GM12878 (cell line): ENCODE measurements at regions of chr18 and their contacts with region 1.

Region 1: DNA sequence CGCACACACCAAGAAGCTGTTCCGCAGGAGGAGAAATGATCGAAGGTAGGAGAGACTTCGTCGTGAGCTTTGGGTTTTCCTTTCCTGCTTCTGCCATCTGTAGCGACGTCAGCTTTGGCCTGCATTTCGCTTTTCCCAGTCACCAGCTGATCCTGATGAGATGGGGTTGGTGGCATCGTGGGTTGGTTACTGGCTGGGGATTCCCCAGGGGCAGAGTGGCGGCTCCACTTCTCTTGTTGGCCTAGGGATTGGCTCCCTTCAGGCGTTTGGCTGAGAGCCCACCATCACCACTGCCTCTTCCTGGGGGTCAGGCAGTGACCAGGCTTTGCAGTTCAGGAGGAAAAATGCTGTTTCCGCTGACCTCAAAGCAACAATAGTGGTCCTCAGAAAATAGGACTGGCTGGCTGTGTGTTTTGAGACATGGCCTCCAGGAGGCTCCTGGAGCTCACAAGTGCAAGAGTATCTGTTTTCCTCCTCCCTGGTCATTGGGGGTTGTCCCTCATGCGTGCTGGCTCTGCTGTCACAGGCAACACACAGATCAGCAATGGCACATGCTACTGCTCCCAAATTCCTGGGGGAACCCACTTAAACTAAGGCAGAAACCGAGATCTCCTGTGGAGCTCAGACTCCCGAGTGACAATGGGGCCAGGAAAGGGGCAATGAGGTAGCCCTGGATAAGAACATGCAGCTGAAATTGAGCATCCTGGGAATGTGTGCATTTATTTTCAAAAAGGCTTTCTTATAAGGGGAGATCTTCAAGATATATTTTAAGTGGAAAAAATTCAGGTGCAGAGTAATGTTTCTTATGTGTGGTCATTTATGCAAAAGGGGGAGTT is 173.0 kb downstream of the CTIF start:
- DNase-seq: no peak
- ATAC-seq: peak; percentile 85
- H3K4me3 ChIP-seq: no peak overlapping the region
- H3K27ac ChIP-seq: no peak overlapping the region
- H3K4me1 ChIP-seq: peaks cover 11% of the 10 kb centered on the region
- H3K27me3 ChIP-seq: no peaks in the 10 kb centered on the region
- CTCF ChIP-seq: peak; percentile 59 to 81 (median 60)
- EP300 ChIP-seq: no peak
- POLR2A ChIP-seq: no peak
- RAD21 ChIP-seq: peak; percentile 83

Region 2: GRCh38 chr18:48728204-48728833 is 16.4 kb after region 1 on chr18:
- CTCF ChIA-PET with region 1: interaction called, 6 read pairs
- POLR2A ChIA-PET with region 1: interaction called, 5 read pairs
- RAD21 ChIA-PET with region 1: interaction called, 13 read pairs
- SMC1A ChIA-PET with region 1: interaction called, 32 read pairs
- in situ Hi-C with region 1: no loop called
- intact Hi-C with region 1: no loop called
- DNase-seq: no peak
- ATAC-seq: no peak
- H3K4me3 ChIP-seq: no peak overlapping the region
- H3K27ac ChIP-seq: no peak overlapping the region
- H3K4me1 ChIP-seq: peaks cover 31% of the 10 kb centered on the region
- H3K27me3 ChIP-seq: no peaks in the 10 kb centered on the region
- CTCF ChIP-seq: no peak
- EP300 ChIP-seq: no peak
- POLR2A ChIP-seq: no peak
- RAD21 ChIP-seq: no peak

Region 3: DNA sequence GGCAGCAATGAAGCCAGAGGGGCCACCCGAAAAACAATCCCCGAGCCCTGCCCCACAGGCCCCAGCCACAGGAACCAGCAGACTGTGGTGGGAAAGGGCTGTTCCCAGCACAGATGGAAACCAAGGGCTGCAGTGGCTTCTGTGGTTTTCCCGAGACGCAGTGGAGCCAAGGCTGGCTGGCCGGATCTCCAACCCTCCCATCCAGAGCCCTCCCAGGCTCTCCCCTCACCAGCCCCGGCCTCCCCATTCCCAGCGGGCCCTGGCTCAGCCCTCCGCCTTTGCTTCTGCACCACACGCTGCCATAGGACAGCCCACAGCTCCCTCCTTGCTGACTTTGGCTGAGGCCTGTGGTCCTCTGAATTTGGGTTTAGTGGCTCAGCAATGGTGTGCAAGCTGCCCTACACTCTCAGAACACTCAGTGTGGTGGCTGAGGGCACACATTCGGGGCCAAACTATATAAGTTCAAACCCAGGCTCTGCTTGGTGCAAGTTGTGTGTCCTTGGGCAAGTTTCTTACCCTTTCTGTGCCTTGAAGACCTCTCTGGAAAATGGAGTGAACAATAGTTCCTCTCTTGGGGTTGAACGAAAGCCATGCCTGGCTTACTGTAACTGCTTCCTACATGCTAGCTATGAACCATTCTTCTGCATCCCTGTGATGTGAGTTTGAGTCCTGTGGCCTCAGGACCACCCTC is 38.8 kb after region 1 on chr18:
- CTCF ChIA-PET with region 1: interaction called, 3 read pairs
- POLR2A ChIA-PET with region 1: interaction called, 4 read pairs
- RAD21 ChIA-PET with region 1: interaction called, 3 read pairs
- SMC1A ChIA-PET with region 1: interaction called, 10 read pairs
- in situ Hi-C with region 1: no loop called
- intact Hi-C with region 1: no loop called
- DNase-seq: no peak
- ATAC-seq: no peak
- H3K4me3 ChIP-seq: no peak overlapping the region
- H3K27ac ChIP-seq: no peak overlapping the region
- H3K4me1 ChIP-seq: peaks cover 28% of the 10 kb centered on the region
- H3K27me3 ChIP-seq: no peaks in the 10 kb centered on the region
- CTCF ChIP-seq: no peak
- EP300 ChIP-seq: no peak
- POLR2A ChIP-seq: no peak
- RAD21 ChIP-seq: no peak

Region 4: DNA sequence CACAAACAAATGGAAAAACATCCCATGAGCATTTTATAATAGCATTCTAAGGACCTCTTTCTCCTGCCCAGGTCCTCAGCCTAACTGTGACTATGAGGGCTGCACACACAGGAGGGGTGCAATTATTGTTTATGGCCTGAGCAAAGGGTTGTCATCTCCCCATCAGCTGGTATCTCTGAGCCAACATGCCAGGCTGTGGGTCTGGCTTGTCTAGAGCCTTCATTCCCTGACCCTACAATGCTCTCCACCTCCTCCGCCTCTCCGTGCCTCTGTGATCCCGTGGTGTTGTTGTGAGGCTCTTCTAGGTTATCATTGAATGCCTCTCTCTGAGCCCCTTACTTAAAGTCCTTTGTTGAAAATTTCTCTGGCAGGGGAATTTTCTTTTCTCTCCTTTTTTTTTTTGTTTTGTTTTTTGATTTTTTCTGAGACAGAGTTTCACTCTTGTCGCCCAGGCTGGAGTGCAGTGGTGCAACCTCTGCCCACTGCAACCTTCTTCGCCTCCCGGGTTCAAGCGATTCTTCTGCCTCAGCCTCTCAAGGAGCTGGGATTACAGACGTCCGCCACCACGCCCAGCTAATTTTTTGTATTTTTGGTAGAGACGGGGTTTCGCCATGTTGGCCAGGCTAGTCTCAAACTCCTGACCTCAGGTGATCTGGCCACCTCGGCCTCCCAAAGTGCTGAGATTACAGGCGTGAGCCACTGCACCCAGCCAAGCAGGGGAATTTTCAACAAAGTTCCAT is 112.5 kb after region 1 on chr18:
- CTCF ChIA-PET with region 1: no interaction called
- POLR2A ChIA-PET with region 1: no interaction called
- RAD21 ChIA-PET with region 1: no interaction called
- SMC1A ChIA-PET with region 1: no interaction called
- in situ Hi-C with region 1: no loop called
- intact Hi-C with region 1: no loop called
- DNase-seq: no peak
- ATAC-seq: no peak
- H3K4me3 ChIP-seq: no peak overlapping the region
- H3K27ac ChIP-seq: no peak overlapping the region
- H3K4me1 ChIP-seq: peaks cover 20% of the 10 kb centered on the region
- H3K27me3 ChIP-seq: no peaks in the 10 kb centered on the region
- CTCF ChIP-seq: no peak
- EP300 ChIP-seq: no peak
- POLR2A ChIP-seq: no peak
- RAD21 ChIP-seq: no peak

Region 5: GRCh38 chr18:48913201-48913600 is 201.3 kb after region 1 on chr18:
- CTCF ChIA-PET with region 1: interaction called, 3 read pairs
- POLR2A ChIA-PET with region 1: no interaction called
- RAD21 ChIA-PET with region 1: interaction called, 7 read pairs
- SMC1A ChIA-PET with region 1: interaction called, 4 read pairs
- in situ Hi-C with region 1: no loop called
- intact Hi-C with region 1: loop called (anchors 5 kb)
- DNase-seq: no peak
- ATAC-seq: peak; percentile 79
- H3K4me3 ChIP-seq: no peak overlapping the region
- H3K27ac ChIP-seq: no peak overlapping the region
- H3K4me1 ChIP-seq: peaks cover 10% of the 10 kb centered on the region
- H3K27me3 ChIP-seq: no peaks in the 10 kb centered on the region
- CTCF ChIP-seq: peak; percentile 38 to 51 (median 43); a peak in 5 of 6 replicates
- EP300 ChIP-seq: no peak
- POLR2A ChIP-seq: no peak
- RAD21 ChIP-seq: peak; percentile 34; the same call in 1 of the 2 replicates

Region 6: GRCh38 chr18:49041435-49042245 is 329.8 kb after region 1 on chr18:
- CTCF ChIA-PET with region 1: interaction called, 22 read pairs
- POLR2A ChIA-PET with region 1: no interaction called
- RAD21 ChIA-PET with region 1: interaction called, 4 read pairs
- SMC1A ChIA-PET with region 1: interaction called, 14 read pairs
- in situ Hi-C with region 1: no loop called
- intact Hi-C with region 1: no loop called
- DNase-seq: no peak
- ATAC-seq: peak; percentile 75
- H3K4me3 ChIP-seq: no peak overlapping the region
- H3K27ac ChIP-seq: no peak overlapping the region
- H3K4me1 ChIP-seq: no peaks in the 10 kb centered on the region
- H3K27me3 ChIP-seq: no peaks in the 10 kb centered on the region
- CTCF ChIP-seq: peak; percentile 49 to 56 (median 53); a peak in 5 of 6 replicates
- EP300 ChIP-seq: no peak
- POLR2A ChIP-seq: no peak
- RAD21 ChIP-seq: peak; percentile 51

Region 7: GRCh38 chr18:49178736-49179135 is 466.9 kb after region 1 on chr18:
- CTCF ChIA-PET with region 1: interaction called, 25 read pairs
- POLR2A ChIA-PET with region 1: no interaction called
- RAD21 ChIA-PET with region 1: interaction called, 12 read pairs
- SMC1A ChIA-PET with region 1: interaction called, 23 read pairs
- in situ Hi-C with region 1: no loop called
- intact Hi-C with region 1: loop called (anchors 1 kb)
- DNase-seq: no peak
- ATAC-seq: peak; percentile 71
- H3K4me3 ChIP-seq: no peak overlapping the region
- H3K27ac ChIP-seq: no peak overlapping the region
- H3K4me1 ChIP-seq: peaks cover 9% of the 10 kb centered on the region; the same call in 1 of the 2 replicates
- H3K27me3 ChIP-seq: no peaks in the 10 kb centered on the region
- CTCF ChIP-seq: peak; percentile 49 to 62 (median 56); a peak in 5 of 6 replicates
- EP300 ChIP-seq: no peak
- POLR2A ChIP-seq: no peak
- RAD21 ChIP-seq: peak; percentile 83

Region 8: DNA sequence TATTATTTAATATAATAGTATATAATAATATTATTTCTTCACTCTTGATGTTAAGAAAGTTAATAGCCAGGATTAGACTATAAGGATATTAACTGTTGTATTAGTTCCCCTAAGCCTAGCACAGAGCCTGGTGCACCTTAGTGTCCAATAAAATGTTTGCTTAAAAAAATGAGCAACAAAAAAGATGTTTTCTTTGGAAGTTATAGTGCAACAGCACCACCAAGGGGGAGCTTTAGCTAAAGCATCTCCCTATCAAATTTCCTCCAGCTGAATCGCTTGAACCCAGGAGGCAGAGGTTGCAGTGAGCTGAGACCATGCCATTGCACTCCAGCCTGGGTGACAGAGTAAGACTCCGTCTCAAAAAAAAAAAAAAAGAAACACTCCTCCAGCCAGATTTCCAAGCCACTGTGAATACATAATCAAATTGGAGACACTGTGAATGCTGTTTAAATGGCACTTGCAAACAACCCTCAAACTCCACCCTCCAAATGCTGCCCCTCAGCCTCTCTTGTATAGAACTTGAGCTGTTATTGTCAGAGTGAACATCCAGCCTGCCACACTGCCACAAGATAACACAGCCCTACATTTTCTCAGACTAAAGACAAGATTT is 526.7 kb after region 1 on chr18:
- CTCF ChIA-PET with region 1: interaction called, 7 read pairs
- POLR2A ChIA-PET with region 1: no interaction called
- RAD21 ChIA-PET with region 1: interaction called, 9 read pairs
- SMC1A ChIA-PET with region 1: interaction called, 10 read pairs
- in situ Hi-C with region 1: no loop called
- intact Hi-C with region 1: no loop called
- DNase-seq: no peak
- ATAC-seq: no peak
- H3K4me3 ChIP-seq: no peak overlapping the region
- H3K27ac ChIP-seq: no peak overlapping the region
- H3K4me1 ChIP-seq: no peaks in the 10 kb centered on the region
- H3K27me3 ChIP-seq: no peaks in the 10 kb centered on the region
- CTCF ChIP-seq: peak; percentile 18 to 50 (median 45); a peak in 4 of 6 replicates
- EP300 ChIP-seq: no peak
- POLR2A ChIP-seq: no peak
- RAD21 ChIP-seq: peak; percentile 59